Activated naive CD4-positive, alpha-beta T cell treated with anti-CD3 and anti-CD28 coated beads, Interleukin-2, amount 10 ng/mL, durations not matched to agents 7 days and 5 days (primary cell): ENCODE measurements at regions of chr12 and their contacts with region 1.

Region 1: DNA sequence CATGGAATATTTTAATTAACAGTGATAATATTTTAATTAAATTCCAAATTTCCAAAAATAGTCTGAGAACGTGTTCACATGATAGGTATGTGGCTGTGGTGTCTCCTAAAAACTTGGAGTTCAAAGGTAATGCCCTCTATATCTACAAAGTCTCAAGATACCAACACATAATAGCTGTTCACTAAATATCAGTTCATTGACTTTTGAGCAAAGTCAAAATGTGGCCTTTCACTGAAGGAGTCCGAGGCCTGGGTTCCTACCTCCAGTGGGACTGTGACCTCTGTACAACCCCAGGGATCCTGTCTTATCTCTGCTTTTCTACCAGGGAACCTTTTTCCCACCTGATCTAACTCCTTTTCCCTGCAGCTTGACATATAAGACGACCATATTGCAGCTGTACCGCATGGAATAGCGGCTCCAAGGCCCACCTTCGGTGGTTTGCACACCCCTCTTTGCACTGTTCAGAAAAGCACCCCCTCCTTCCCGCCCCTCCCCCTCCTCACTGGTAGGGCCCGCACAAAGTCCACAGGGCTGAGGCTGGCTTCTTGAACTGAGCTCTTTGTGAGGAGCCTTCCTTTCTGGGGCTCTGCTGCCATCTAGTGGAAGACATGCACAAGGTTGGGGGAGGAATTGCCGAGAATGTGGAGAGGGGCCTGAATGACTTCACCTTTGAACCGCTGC is 3.1 kb downstream of the CCND2 start:
- DNase-seq: peak; percentile 92
- H3K4me3 Mint-ChIP-seq: peak overlapping the region; percentile 89
- H3K27ac Mint-ChIP-seq: peak overlapping the region; percentile 99
- H3K4me1 Mint-ChIP-seq: peaks cover 57% of the 10 kb centered on the region
- H3K27me3 Mint-ChIP-seq: no peaks in the 10 kb centered on the region

Region 2: DNA sequence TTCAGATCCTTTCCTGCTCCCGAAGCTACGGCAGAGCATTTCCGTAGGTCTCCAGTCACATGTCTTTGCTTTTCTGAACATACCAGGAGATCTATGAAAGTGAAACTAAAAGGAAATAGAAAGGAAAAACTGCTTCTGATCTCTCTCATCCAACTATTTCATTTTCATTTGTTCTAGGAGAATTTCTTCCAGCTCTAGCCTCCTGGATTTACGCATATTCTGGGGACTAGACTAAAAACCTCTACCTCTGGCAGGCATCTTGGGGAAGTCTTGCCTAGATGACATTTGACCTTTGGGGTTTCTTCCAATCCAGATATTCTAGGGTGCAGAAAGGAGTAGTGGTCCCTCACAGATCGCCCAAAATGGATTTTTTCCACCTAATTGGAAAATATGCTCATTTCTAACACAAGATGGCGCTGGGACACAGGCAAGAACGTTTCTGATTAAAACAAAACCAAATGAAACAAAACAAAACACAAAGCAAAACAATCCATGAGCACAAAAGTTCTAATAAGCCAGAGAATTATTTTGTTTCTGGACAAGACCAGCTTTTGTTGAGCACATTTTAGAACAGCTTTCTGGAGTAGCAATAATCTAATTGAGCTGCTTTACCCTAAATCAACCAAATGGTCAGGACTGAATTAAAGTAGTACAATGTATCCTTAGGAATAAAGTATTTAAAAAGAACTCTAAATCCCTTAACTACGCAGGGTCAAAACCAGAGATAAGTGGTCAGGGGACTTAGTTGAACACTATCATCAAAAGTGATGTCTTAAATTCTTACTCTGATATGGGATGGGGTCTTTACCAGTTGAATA is 391.2 kb before region 1 on chr12:
- CTCF ChIA-PET with region 1: interaction called, 106 read pairs
- DNase-seq: peak; percentile 51
- H3K4me3 Mint-ChIP-seq: no peak overlapping the region
- H3K27ac Mint-ChIP-seq: no peak overlapping the region
- H3K4me1 Mint-ChIP-seq: peaks cover 14% of the 10 kb centered on the region
- H3K27me3 Mint-ChIP-seq: peaks cover 17% of the 10 kb centered on the region

Region 3: GRCh38 chr12:3988519-3989448 is 287.9 kb before region 1 on chr12:
- CTCF ChIA-PET with region 1: interaction called, 56 read pairs
- DNase-seq: peak; percentile 50
- H3K4me3 Mint-ChIP-seq: no peak overlapping the region
- H3K27ac Mint-ChIP-seq: peak overlapping the region; percentile 88
- H3K4me1 Mint-ChIP-seq: peaks cover 24% of the 10 kb centered on the region
- H3K27me3 Mint-ChIP-seq: peaks cover 23% of the 10 kb centered on the region

Region 4: DNA sequence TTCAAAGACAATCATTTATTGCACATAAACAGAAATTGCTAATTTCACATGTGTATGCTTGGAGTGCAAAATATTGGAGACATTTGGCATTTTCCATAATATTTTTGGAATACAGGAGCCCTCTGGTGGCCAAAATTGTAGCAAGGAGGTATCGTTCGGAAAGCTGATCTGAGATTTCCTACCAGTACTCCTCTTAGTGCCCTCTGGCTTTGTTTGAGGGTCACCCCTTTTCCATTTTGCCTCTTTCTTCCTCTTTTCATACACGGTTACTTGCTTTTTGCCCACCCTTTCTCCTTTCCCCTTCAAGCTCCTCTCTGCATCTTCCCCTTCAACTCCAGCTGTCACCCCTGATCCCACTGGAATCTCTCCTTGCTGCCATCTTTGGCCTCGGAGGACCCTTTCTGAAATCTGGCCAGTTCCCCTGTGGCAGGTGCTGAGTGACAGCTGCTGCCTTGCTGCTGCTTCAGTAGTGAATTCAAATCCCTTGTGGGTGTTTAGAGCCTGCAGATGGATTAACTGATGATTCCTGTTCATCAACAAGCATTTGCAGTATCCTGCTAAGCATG is 238.8 kb before region 1 on chr12:
- CTCF ChIA-PET with region 1: interaction called, 10 read pairs
- DNase-seq: no peak
- H3K4me3 Mint-ChIP-seq: no peak overlapping the region
- H3K27ac Mint-ChIP-seq: no peak overlapping the region
- H3K4me1 Mint-ChIP-seq: peaks cover 6% of the 10 kb centered on the region
- H3K27me3 Mint-ChIP-seq: peaks cover 31% of the 10 kb centered on the region

Region 5: DNA sequence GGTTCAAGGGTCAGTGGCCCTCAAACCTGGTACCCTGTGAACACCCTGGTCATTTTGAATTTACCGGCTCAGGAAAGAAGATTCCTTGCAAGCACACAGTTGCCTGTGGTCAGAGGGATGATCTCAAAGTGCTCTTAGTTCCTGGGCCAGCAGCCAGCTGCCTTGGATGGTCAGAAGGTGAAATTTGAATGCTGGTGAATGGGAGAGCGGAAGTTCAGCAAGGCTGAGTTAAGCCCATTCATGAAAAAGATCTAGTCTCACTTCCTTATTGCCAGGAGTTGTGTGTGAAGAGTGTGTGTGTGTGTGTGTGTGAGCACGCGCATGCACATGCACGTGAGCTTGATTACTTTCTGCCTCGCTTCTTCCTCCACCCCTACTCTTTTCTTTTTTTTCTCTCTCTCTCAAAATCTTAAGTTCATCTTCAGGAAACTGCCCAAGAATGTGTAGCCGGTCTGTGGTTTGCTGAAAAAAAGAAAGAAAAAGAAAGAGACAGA is 158.6 kb before region 1 on chr12:
- CTCF ChIA-PET with region 1: interaction called, 22 read pairs
- DNase-seq: peak; percentile 44
- H3K4me3 Mint-ChIP-seq: peak overlapping the region; percentile 56
- H3K27ac Mint-ChIP-seq: peak overlapping the region; percentile 86
- H3K4me1 Mint-ChIP-seq: peaks cover 66% of the 10 kb centered on the region
- H3K27me3 Mint-ChIP-seq: peaks cover 16% of the 10 kb centered on the region

Region 6: DNA sequence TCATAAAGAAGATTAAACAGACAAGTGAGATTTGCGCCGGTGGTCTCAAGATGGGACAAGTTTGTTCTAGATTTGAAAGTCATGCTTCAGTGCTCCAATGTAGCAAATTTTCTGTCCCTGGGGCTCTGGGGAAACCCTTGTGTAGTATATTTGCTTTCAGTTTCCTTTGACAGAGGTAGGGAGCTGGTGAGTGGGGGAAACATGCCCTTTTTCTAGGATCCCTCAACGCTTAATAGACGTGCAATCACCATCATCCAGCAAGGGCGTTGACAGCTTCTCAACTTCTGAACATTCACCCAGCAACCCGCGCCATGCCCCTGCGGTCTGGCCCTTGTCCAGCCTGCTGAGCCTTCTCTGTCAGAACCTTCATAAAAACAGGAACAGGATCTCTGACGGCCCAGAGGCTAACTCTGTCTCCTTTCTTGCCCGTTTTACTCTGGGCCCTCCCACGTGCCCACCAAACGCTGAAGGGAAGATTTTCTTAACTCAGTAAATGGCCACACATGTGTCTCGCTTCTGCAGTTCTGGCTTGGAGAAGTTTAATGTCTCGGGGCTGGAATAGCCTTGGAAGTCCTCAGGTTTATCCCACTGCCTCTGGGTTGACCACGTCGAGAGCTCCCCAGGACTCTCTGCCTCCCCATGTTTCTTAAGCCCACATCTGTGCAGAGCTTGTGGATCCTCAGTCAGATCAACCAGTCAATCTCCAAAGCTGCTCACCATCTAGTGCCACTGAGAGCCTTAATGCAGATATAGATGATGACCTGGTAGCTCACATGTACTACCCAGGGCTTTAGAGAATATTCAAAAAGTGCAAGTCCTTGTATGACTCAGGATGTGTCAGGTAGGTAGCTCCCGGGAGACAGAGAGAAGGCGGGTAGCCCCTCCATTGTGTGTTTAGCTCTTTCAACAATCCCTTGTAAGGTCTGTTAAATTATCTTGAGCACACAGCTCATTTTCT is 61.2 kb before region 1 on chr12:
- CTCF ChIA-PET with region 1: interaction called, 10 read pairs
- DNase-seq: peak; percentile 50
- H3K4me3 Mint-ChIP-seq: peak overlapping the region; percentile 45
- H3K27ac Mint-ChIP-seq: peak overlapping the region; percentile 83
- H3K4me1 Mint-ChIP-seq: peaks cover 31% of the 10 kb centered on the region
- H3K27me3 Mint-ChIP-seq: peaks cover 22% of the 10 kb centered on the region

Region 7: DNA sequence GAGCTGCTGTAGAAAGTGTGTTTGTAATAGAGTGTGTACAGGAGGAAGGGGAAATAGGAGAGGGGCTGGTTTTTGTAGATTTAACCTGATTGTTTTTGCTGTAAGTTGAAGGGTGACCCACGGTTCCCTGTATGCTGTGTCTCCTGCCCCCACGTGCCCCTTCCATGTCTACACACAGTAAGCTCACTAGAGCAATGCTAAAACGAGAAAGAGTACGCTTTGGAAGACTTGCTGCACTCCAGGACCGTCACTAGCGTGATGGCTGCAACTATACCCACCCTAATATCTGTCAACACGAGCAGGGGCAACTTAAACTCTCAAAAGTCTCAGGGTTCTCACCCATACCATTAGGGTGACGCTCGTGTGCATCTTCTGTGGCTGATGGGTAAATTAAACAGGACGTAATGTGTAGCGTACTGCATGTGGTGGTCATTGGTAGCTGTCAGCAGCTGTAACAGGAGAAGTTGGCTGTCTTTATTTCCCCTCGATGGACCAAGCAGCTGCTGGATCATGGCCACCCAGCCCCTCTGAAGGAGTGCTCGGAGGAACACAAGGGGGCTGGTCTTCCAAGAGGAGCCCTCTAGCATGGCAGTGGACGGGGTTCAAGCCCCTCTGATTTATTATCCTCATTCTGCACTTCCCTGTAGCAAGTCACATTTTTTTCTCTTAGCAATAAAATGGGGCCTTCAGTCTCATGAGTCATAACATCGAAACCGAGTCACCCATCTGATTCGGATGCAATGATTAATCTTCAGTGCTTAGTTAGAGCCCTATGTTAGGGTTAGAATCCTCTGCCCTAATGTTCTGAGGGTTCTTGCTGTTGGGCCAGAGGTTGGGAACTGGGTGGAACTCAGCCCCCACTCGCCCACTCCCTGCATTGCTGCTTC is 10.9 kb after region 1 on chr12:
- CTCF ChIA-PET with region 1: interaction called, 22 read pairs
- DNase-seq: no peak
- H3K4me3 Mint-ChIP-seq: no peak overlapping the region
- H3K27ac Mint-ChIP-seq: peak overlapping the region; percentile 66
- H3K4me1 Mint-ChIP-seq: peaks cover 82% of the 10 kb centered on the region
- H3K27me3 Mint-ChIP-seq: no peaks in the 10 kb centered on the region

Region 8: DNA sequence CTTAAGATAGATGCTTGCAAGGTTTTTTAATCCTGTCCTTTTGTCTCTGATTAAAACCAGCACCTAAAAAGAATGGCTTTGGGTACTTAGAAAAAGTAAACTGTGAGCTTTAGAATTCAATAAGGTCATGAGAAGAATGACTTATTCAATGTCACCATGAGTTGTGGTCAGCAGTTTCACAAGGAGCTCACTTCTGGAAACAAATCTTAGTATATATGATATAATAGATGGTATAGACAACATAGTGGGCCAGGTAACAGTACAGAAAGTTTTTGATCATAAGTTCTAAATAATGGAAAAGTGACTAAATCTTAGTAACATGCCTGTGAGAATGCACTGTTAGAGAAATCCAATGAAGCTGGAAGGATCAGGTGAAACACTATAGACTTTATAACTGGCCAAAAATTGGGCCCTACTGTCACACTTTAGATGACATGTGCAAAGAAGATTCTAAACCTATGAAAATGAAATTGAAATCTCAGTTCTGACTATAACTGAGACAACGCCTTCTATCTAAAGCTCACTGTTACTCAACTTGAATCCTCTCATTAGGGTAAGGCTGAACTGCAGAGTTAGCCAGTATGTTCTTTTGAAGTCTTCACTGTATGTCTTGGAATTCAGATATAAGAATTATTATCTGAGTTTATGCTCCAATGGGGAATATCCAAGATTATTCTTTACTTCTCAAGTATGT is 219.6 kb after region 1 on chr12:
- CTCF ChIA-PET with region 1: no interaction called
- DNase-seq: no peak
- H3K4me3 Mint-ChIP-seq: no peak overlapping the region
- H3K27ac Mint-ChIP-seq: no peak overlapping the region
- H3K4me1 Mint-ChIP-seq: peaks cover 8% of the 10 kb centered on the region
- H3K27me3 Mint-ChIP-seq: no peaks in the 10 kb centered on the region